ENCODE measurements at regions of chr11 and their contacts with region 1.

Region 1: GRCh38 chr11:110429731-110430266 is at the start of gene FDX1:
- DNase-seq: peak; percentile 80
- H3K4me3 Mint-ChIP-seq: peak within 1 kb of the TSS; percentile 97
- H3K27ac Mint-ChIP-seq: peak within 1 kb of the TSS; percentile 94
- H3K4me1 Mint-ChIP-seq: peaks cover 41% of the 10 kb centered on the region
- H3K27me3 Mint-ChIP-seq: no peaks in the 10 kb centered on the region
- CTCF ChIP-seq: peak; percentile 46
- total RNA-seq, gene FDX1: 19.9 and 21.1 TPM in 2 replicates

Region 2: DNA sequence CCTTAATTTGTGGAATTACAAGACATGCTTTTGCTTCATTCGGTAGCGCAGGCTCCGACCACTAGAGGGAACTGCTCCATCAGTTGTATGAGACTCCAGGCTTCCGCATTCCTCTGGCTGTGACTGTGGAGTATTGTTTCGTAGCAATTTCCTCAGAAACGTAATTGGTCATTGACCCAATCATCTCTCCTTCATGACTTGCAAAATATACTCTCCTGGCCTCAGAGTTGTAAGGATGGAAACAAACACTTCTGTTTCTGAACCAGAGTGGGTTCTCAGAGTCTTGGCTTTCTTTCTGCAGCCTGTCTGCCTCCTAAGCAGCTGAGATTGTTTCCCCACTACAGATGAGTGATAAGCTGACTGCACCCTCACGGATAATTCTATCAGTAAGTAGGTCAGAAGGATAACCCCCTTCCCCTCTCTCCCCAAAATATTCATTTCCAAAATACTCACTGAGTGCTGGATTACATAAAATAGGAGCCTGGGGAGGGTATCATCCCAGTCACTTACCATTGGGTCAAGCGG is 483.4 kb before region 1 on chr11:
- CTCF ChIA-PET with region 1: interaction called, 4 read pairs
- POLR2A ChIA-PET with region 1: interaction called, 4 read pairs
- intact Hi-C with region 1: loop called (anchors 2 kb)
- DNase-seq: peak; percentile 93
- H3K4me3 Mint-ChIP-seq: peak overlapping the region; percentile 66
- H3K27ac Mint-ChIP-seq: peak overlapping the region; percentile 90
- H3K4me1 Mint-ChIP-seq: peaks cover 13% of the 10 kb centered on the region
- H3K27me3 Mint-ChIP-seq: no peaks in the 10 kb centered on the region
- CTCF ChIP-seq: peak; percentile 85

Region 3: DNA sequence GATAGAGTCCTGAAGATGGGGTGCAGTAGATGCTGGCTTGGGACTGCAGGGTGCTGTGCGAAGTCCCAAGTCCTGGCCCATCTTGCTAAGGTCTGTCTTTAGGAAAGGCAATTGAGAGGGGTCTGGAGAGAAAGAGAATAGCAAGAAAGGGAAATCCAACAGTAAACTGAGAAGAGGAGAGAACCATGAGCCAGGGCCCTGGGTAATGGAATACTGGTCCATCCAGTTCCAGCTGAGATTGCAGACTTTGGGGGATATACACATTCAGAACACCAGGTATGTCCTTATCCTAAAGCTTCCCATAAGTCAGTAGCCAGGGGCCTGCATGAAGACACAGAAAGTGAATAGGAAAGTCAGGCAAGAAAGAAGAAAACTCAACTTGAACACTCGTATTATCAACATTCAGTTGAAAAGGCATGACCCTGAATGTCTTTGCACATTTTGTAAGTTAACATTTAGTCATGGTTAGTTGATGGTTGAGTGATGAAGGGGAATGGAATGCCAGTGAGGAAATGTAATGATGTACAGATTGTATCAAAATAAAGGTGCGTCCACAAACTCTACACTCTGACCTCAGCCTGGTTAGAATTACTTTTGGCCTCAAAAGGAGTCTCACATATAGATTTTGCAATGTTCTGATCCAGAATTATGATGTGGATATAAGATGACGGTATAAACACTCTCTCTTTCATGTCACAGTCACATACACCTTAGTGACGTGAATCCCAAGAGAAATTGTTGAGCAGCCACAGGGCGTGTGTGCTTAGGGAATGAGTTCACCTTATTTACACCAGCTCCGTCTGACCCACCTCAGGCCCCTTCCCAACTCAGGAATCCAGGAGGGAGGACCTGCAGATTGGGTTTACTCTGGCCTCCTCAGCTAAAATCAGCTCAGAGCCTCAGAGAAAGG is 233.7 kb before region 1 on chr11:
- CTCF ChIA-PET with region 1: interaction called, 73 read pairs
- POLR2A ChIA-PET with region 1: interaction called, 13 read pairs
- intact Hi-C with region 1: loop called (anchors 1 kb)
- DNase-seq: peak; percentile 95
- H3K4me3 Mint-ChIP-seq: peak overlapping the region; percentile 47
- H3K27ac Mint-ChIP-seq: peak overlapping the region; percentile 99
- H3K4me1 Mint-ChIP-seq: peaks cover 58% of the 10 kb centered on the region
- H3K27me3 Mint-ChIP-seq: no peaks in the 10 kb centered on the region
- CTCF ChIP-seq: no peak

Region 4: GRCh38 chr11:110362971-110363509 is 66.8 kb before region 1 on chr11:
- CTCF ChIA-PET with region 1: interaction called, 10 read pairs
- POLR2A ChIA-PET with region 1: no interaction called
- intact Hi-C with region 1: no loop called
- DNase-seq: peak; percentile 32
- H3K4me3 Mint-ChIP-seq: no peak overlapping the region
- H3K27ac Mint-ChIP-seq: peak overlapping the region; percentile 89
- H3K4me1 Mint-ChIP-seq: peaks cover 16% of the 10 kb centered on the region
- H3K27me3 Mint-ChIP-seq: no peaks in the 10 kb centered on the region
- CTCF ChIP-seq: no peak

Region 5: GRCh38 chr11:110415081-110415480 is 14.7 kb before region 1 on chr11:
- CTCF ChIA-PET with region 1: interaction called, 18 read pairs
- POLR2A ChIA-PET with region 1: interaction called, 4 read pairs
- intact Hi-C with region 1: no loop called
- DNase-seq: no peak
- H3K4me3 Mint-ChIP-seq: no peak overlapping the region
- H3K27ac Mint-ChIP-seq: no peak overlapping the region
- H3K4me1 Mint-ChIP-seq: no peaks in the 10 kb centered on the region
- H3K27me3 Mint-ChIP-seq: no peaks in the 10 kb centered on the region
- CTCF ChIP-seq: no peak

Region 6: GRCh38 chr11:110479108-110480101 is 49.6 kb after region 1 on chr11:
- CTCF ChIA-PET with region 1: no interaction called
- POLR2A ChIA-PET with region 1: no interaction called
- intact Hi-C with region 1: no loop called
- DNase-seq: peak; percentile 69
- H3K4me3 Mint-ChIP-seq: no peak overlapping the region
- H3K27ac Mint-ChIP-seq: no peak overlapping the region
- H3K4me1 Mint-ChIP-seq: no peaks in the 10 kb centered on the region
- H3K27me3 Mint-ChIP-seq: no peaks in the 10 kb centered on the region
- CTCF ChIP-seq: no peak

Region 7: GRCh38 chr11:111230122-111230465 is 800.3 kb after region 1 on chr11:
- CTCF ChIA-PET with region 1: interaction called, 33 read pairs
- POLR2A ChIA-PET with region 1: no interaction called
- intact Hi-C with region 1: no loop called
- DNase-seq: no peak
- H3K4me3 Mint-ChIP-seq: peak overlapping the region; percentile 79
- H3K27ac Mint-ChIP-seq: peak overlapping the region; percentile 85
- H3K4me1 Mint-ChIP-seq: no peaks in the 10 kb centered on the region
- H3K27me3 Mint-ChIP-seq: peaks cover 40% of the 10 kb centered on the region
- CTCF ChIP-seq: no peak

Measured in MCF 10A (cell line).